ENCODE measurements at regions of chr16 and their contacts with region 1.

Region 1: GRCh38 chr16:29745853-29746345 is at the start of gene C16orf54:
- DNase-seq: peak; percentile 88 to 98 (median 95)
- ATAC-seq: peak; percentile 81
- H3K4me3 ChIP-seq: peak within 1 kb of the TSS; percentile 90 to 93
- H3K4me3 Mint-ChIP-seq: peak within 1 kb of the TSS; percentile 94
- H3K27ac ChIP-seq: peak within 1 kb of the TSS; percentile 96 to 98
- H3K27ac Mint-ChIP-seq: peak within 1 kb of the TSS; percentile 96
- H3K4me1 ChIP-seq: peaks cover 62% of the 10 kb centered on the region
- H3K4me1 Mint-ChIP-seq: peaks cover 69% of the 10 kb centered on the region
- H3K27me3 ChIP-seq: no peaks in the 10 kb centered on the region
- H3K27me3 Mint-ChIP-seq: no peaks in the 10 kb centered on the region
- CTCF ChIP-seq: no peak
- total RNA-seq, gene C16orf54: 129 to 132 TPM

Region 2: DNA sequence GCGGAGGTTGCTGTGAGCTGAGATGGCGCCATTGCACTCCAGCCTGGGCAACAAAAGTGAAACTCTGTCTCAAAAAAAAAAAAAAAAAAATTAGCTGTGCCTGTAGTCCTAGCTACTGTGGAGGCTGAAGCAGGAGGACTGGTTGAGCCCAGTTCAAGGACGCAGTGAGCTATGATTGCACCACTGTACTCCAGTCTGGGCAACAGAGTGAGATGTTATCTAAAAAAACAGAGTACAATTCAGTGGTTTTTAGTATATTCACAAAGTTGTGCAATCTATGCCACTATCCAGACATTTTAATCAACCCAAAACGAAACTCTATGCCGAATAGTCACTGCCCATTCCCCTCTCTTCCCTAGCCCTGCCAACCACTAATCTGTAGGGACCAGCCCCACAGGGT is 25.2 kb before region 1 on chr16:
- CTCF ChIA-PET with region 1: interaction called, 3 read pairs
- POLR2A ChIA-PET with region 1: interaction called, 3 read pairs
- intact Hi-C with region 1: loop called in 1 of 2 experiments (anchors 1 kb)
- DNase-seq: no peak
- ATAC-seq: no peak
- H3K4me3 ChIP-seq: no peak overlapping the region
- H3K4me3 Mint-ChIP-seq: no peak overlapping the region
- H3K27ac ChIP-seq: no peak overlapping the region
- H3K27ac Mint-ChIP-seq: no peak overlapping the region
- H3K4me1 ChIP-seq: peaks cover 3% of the 10 kb centered on the region
- H3K4me1 Mint-ChIP-seq: peaks cover 17% of the 10 kb centered on the region
- H3K27me3 ChIP-seq: no peaks in the 10 kb centered on the region
- H3K27me3 Mint-ChIP-seq: no peaks in the 10 kb centered on the region
- CTCF ChIP-seq: no peak

Region 3: GRCh38 chr16:29825145-29826044 is 79.5 kb after region 1 on chr16:
- CTCF ChIA-PET with region 1: no interaction called
- POLR2A ChIA-PET with region 1: no interaction called
- intact Hi-C with region 1: no loop called
- DNase-seq: peak in 4 of 9 experiments; percentile 32 to 63 (median 50)
- ATAC-seq: peak; percentile 25
- H3K4me3 ChIP-seq: no peak overlapping the region
- H3K4me3 Mint-ChIP-seq: peak overlapping the region; percentile 72
- H3K27ac ChIP-seq: peak overlapping the region; percentile 26 to 37
- H3K27ac Mint-ChIP-seq: peak overlapping the region; percentile 92
- H3K4me1 ChIP-seq: peaks cover 91% of the 10 kb centered on the region
- H3K4me1 Mint-ChIP-seq: peaks cover 75% of the 10 kb centered on the region
- H3K27me3 ChIP-seq: no peaks in the 10 kb centered on the region
- H3K27me3 Mint-ChIP-seq: no peaks in the 10 kb centered on the region
- CTCF ChIP-seq: no peak

Measured in CD8-positive, alpha-beta T cell (primary cell).